HEK293 (cell line): ENCODE measurements at regions of chr19 and their contacts with region 1.

Region 1: DNA sequence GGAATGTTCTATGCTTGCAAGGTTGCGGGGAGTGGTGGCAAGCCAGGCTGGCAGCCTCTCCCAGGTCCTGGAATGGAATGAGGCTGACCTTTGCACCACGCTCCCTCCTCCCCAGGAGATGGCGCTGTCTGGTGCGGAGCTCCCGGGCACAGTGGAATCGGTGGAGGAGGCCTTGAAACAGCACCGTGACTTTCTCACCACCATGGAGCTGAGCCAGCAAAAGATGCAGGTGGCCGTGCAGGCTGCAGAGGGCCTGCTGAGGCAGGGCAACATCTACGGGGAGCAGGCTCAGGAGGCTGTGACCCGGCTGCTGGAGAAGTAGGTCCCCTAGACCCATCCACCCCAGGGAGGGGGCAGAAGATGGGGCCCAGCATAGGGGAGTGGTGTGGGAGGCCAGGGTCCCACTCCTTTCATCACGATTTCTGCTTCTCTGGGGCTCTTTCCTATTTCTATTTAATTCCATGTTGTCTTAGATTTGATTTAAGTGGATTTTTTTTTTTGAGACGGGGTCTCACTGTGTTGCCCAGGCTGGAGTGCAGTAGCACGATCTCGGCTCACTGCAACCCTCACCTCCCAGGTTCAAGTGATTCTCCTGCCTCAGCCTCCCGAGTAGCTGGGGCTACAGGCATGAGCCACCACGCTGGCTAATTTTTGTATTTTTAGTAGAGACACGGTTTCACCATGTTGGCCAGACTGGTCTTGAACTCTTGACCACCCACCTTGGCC is 53.2 kb upstream of the SHKBP1 start:
- H3K4me3 ChIP-seq: no peak overlapping the region; the same call in 1 of the 2 replicates
- H3K27ac ChIP-seq: peak overlapping the region; percentile 47; the same call in 1 of the 2 replicates
- H3K4me1 ChIP-seq: peaks cover 9% of the 10 kb centered on the region
- CTCF ChIP-seq: peak; percentile 99

Region 2: GRCh38 chr19:39778763-39779162 is 744.7 kb before region 1 on chr19 and contains the start of gene LEUTX:
- CTCF ChIA-PET with region 1: no interaction called
- POLR2A ChIA-PET with region 1: no interaction called
- H3K4me3 ChIP-seq: no peak within 1 kb of the TSS
- H3K27ac ChIP-seq: no peak within 1 kb of the TSS
- H3K4me1 ChIP-seq: no peaks in the 10 kb centered on the region
- CTCF ChIP-seq: no peak

Region 3: DNA sequence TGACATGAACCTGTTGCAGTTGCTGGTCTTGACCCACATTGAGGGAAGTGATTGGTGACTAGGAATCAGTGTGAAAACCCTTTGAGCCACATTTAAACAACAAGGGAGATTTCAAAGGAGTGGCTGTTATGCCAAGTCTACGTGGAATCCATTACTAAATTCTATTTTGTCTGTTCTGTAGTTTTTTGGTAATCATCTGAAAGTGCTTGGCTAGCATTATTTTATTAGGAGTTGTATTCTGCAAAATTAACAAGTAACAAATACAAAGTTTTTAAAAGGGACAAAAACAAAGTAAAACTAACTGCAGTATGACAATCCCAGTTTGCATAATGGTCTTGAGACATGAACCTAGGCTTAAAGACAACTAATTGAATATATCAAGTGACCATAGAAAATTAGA is 418.7 kb before region 1 on chr19:
- CTCF ChIA-PET with region 1: no interaction called
- POLR2A ChIA-PET with region 1: no interaction called
- H3K4me3 ChIP-seq: no peak overlapping the region
- H3K27ac ChIP-seq: no peak overlapping the region
- H3K4me1 ChIP-seq: no peaks in the 10 kb centered on the region
- CTCF ChIP-seq: no peak

Region 4: DNA sequence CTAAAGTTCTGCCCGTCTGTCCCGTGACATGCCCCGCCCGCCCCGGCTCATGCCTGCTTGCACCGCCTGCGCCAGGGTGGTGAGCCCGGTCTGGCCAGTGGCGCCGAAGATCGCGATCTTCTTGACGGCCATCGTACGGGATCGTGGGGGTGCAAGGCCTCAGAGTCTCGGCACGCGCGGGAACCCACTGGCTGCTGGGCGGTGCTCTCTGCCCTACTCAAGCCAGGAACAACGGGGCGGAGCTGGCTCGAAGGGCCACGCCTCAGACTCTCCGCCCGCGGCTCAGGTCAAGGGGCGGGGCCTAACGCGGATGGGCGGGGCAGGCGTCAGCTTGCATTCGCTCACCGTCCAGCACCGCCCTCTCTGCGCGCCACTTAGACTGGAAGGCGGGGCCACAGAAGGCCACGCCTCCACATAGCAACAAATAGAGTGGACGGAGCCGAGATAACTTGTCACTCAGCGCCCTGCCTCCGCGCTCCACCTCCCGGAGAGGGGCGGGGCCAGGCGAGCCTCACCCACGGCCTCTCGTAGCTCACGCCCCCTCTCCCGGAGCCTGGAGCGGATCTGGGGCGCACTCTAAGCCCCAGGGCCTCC is 57.8 kb before region 1 on chr19 and contains the start of gene BLVRB:
- CTCF ChIA-PET with region 1: interaction called, 38 read pairs
- POLR2A ChIA-PET with region 1: interaction called, 7 read pairs
- H3K4me3 ChIP-seq: peak within 1 kb of the TSS; percentile 53
- H3K27ac ChIP-seq: peak within 1 kb of the TSS; percentile 20; the same call in 1 of the 2 replicates
- H3K4me1 ChIP-seq: peaks cover 13% of the 10 kb centered on the region
- CTCF ChIP-seq: no peak

Region 5: GRCh38 chr19:40512473-40513344 is 10.8 kb before region 1 on chr19:
- CTCF ChIA-PET with region 1: interaction called, 15 read pairs
- POLR2A ChIA-PET with region 1: interaction called, 3 read pairs
- H3K4me3 ChIP-seq: no peak overlapping the region
- H3K27ac ChIP-seq: no peak overlapping the region
- H3K4me1 ChIP-seq: no peaks in the 10 kb centered on the region
- CTCF ChIP-seq: no peak

Region 6: GRCh38 chr19:40592170-40592569 is 68.7 kb after region 1 on chr19:
- CTCF ChIA-PET with region 1: interaction called, 17 read pairs
- POLR2A ChIA-PET with region 1: no interaction called
- H3K4me3 ChIP-seq: no peak overlapping the region
- H3K27ac ChIP-seq: no peak overlapping the region
- H3K4me1 ChIP-seq: peaks cover 14% of the 10 kb centered on the region
- CTCF ChIP-seq: no peak

Region 7: DNA sequence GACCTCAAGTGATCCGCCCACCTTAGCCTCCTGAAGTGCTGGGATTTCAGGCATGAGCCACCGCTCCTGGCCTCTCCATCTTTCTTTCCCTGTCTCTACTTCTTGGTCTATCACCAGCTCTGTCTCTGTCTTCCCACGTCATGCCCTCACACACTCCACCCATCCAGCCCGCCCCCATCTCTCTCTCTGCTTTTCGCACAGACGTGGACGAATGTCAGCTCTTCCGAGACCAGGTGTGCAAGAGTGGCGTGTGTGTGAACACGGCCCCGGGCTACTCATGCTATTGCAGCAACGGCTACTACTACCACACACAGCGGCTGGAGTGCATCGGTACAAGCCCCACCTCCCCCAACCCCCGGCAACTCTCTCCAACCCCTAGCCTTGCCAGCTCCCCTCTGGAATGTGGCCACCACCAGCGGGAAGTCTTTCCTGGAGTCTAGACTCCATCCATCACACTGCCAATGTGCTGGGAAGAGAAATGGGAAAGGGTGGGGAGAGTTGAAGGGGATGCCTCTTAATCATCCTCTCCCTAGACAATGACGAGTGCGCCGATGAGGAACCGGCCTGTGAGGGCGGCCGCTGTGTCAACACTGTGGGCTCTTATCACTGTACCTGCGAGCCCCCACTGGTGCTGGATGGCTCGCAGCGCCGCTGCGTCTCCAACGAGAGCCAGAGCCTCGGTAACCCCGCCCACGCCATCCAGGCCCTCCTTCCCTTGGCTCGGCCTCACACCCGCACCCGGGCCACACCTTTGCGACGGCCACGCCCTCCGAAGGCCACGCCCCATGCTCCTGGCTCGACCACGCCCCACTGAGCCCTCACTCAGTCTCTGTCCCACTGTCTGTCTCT is 100.1 kb after region 1 on chr19:
- CTCF ChIA-PET with region 1: interaction called, 13 read pairs
- POLR2A ChIA-PET with region 1: no interaction called
- H3K4me3 ChIP-seq: peak overlapping the region; percentile 0
- H3K27ac ChIP-seq: peak overlapping the region; percentile 59; the same call in 1 of the 2 replicates
- H3K4me1 ChIP-seq: peaks cover 16% of the 10 kb centered on the region
- CTCF ChIP-seq: no peak